Natural killer cell (primary cell): ENCODE measurements at regions of chr1 and their contacts with region 1.

Region 1: DNA sequence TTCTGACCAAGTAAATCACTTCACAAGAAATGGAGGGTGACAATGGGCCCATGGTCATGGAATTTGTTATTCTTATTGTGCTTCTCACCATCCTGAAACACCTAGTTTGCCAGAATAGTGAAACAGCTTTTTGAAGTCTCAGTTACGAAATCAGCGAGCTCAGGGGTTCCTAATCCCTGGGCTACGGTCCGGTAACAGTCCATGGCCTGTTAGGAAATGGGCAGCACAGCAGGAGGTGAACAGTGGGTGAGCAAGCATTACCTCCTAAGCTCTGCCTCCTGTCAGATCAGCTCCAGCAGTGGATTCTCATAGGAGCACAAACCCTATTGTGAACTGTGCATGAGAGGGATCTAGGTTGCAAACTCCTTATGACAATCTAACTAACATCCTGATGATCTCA is 1356.3 kb downstream of the KCNT2 start:
- DNase-seq: no peak
- ATAC-seq: no peak
- H3K4me3 ChIP-seq: no peak overlapping the region
- H3K4me3 Mint-ChIP-seq: no peak overlapping the region
- H3K27ac ChIP-seq: no peak overlapping the region
- H3K27ac Mint-ChIP-seq: no peak overlapping the region
- H3K4me1 ChIP-seq: no peaks in the 10 kb centered on the region
- H3K4me1 Mint-ChIP-seq: no peaks in the 10 kb centered on the region
- H3K27me3 ChIP-seq: no peaks in the 10 kb centered on the region
- H3K27me3 Mint-ChIP-seq: no peaks in the 10 kb centered on the region
- CTCF ChIP-seq: no peak

Region 2: DNA sequence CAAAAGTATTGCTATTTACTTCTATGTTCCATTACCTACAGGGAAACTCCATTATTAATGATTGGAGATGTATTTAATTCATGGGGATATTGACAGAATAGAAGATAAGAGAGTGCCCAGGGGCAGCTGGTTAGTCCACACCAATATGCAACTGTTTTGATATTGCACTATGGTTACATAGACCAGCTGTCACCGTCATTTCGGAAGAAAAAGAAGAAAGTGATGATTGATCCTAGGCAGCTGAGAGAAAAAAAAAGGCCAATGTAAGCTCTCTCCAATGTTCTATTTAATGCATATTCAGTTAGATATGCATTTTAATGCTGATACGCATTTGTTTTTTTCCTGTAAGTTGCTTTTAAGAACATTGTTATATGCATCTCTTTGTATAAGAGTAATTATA is 10.8 kb before region 1 on chr1:
- intact Hi-C with region 1: loop called (anchors 1 kb)
- DNase-seq: no peak
- ATAC-seq: no peak
- H3K4me3 ChIP-seq: no peak overlapping the region
- H3K4me3 Mint-ChIP-seq: no peak overlapping the region
- H3K27ac ChIP-seq: no peak overlapping the region
- H3K27ac Mint-ChIP-seq: no peak overlapping the region
- H3K4me1 ChIP-seq: no peaks in the 10 kb centered on the region
- H3K4me1 Mint-ChIP-seq: no peaks in the 10 kb centered on the region
- H3K27me3 ChIP-seq: no peaks in the 10 kb centered on the region
- H3K27me3 Mint-ChIP-seq: no peaks in the 10 kb centered on the region
- CTCF ChIP-seq: no peak

Region 3: DNA sequence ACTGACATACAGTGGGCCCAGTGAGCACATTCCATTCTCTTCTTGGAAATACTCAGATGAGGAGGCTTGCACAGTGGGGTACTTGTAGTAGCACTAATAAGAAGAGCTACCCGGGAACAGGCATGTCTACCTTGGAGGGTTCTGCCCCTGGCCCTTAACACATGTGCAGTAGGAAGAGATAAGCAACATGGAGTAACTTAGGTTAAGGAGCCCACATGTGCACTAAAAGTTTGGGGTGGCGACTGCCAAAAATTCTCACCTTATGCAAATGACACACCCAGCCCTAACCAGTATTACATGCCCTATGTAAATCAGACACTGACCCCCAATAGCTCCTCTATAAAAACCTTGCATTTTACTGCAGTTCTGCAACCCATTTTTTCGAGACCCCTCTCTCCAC is 43.0 kb after region 1 on chr1:
- intact Hi-C with region 1: no loop called
- DNase-seq: no peak
- ATAC-seq: no peak
- H3K4me3 ChIP-seq: no peak overlapping the region
- H3K4me3 Mint-ChIP-seq: no peak overlapping the region
- H3K27ac ChIP-seq: no peak overlapping the region
- H3K27ac Mint-ChIP-seq: no peak overlapping the region
- H3K4me1 ChIP-seq: no peaks in the 10 kb centered on the region
- H3K4me1 Mint-ChIP-seq: no peaks in the 10 kb centered on the region
- H3K27me3 ChIP-seq: no peaks in the 10 kb centered on the region
- H3K27me3 Mint-ChIP-seq: no peaks in the 10 kb centered on the region
- CTCF ChIP-seq: no peak